Posterior cingulate gyrus (tissue), 11 donors: ENCODE measurements at regions of chr17 and their contacts with region 1.

Region 1: DNA sequence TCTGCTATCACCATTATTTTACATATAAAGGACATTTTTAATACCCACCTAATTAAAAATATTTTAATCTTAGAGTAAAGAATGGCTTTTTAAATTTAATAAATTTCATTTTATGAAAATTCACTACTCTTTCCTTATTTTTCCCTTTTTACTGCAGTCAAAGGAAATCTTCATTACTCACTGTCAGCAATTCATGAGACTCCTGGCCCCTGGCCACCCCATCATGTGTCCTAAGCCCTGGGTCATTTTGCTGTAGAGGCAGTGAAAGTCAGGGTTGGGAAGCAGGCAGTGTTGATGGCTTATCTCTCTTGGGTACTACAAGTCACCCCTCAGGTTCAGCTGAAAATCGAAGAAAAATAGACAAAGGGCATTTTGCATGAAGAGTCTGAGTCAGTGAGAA is 468.6 kb upstream of the CCL2 start:
- DNase-seq: no peak

Region 2: GRCh38 chr17:34361478-34362061 is 575.1 kb after region 1 on chr17:
- intact Hi-C with region 1: loop called (anchors 10 kb)
- DNase-seq: peak; percentile 54 to 98 (median 86)